Activated B cell treated with CpG ODN at 0.5 μM for 24 hours (primary cell): ENCODE measurements at regions of chr6 and their contacts with region 1.

Region 1: GRCh38 chr6:139364302-139364981 is 10.0 kb downstream of the CITED2 start:
- DNase-seq: no peak
- ATAC-seq: peak; percentile 67
- H3K4me3 Mint-ChIP-seq: peak overlapping the region; percentile 9
- H3K27ac Mint-ChIP-seq: no peak overlapping the region
- H3K4me1 Mint-ChIP-seq: peaks cover 20% of the 10 kb centered on the region
- H3K27me3 Mint-ChIP-seq: no peaks in the 10 kb centered on the region
- CTCF ChIP-seq: peak; percentile 67

Region 2: DNA sequence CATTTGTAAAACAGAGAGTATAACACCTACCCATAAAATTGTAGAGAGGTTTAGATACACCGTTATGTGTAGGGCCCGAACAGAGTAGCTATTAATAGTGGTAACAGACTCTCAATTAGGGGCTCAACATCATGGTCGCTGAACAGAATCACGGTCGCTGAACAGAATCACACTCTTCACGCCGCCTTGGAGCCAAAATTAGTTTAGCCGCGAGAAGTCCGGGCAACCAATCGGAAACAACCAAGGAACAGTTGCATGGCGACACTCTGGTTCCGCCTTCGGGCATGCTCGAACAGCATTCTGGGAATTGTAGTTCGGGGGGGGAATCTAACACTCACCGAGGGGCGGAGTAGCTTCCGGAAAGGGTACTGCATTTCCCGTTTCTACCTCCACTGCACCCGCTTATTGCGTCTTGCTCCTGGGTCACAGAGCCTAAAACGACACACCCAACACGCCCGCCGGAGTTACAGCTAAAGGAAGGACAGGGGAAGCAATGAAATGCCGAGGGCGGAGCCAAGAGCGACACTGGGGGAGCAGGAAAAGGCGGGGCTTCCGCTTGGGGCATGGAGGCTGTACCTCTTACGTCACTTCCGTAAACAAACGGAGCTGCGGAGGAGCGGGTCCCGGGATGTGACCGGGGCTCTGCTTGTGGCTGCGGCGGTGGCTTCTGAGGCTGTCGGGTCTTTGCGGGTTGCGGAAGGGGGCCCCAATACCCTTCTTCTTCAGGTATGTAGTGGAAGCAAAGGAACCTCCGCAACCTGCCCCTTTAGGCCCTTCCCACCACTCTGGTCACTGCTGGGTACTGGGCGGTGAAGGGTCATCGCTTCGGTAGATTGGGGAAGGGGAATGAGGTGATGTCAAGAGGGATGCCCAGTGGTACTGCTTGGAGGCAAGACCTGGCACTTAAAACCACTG is 591.0 kb before region 1 on chr6 and contains the start of gene CCDC28A:
- CTCF ChIA-PET with region 1: interaction called, 3 read pairs
- POLR2A ChIA-PET with region 1: no interaction called
- intact Hi-C with region 1: loop called (anchors 2 kb)
- DNase-seq: peak; percentile 90
- ATAC-seq: peak; percentile 85
- H3K4me3 Mint-ChIP-seq: peak within 1 kb of the TSS; percentile 100
- H3K27ac Mint-ChIP-seq: peak within 1 kb of the TSS; percentile 100
- H3K4me1 Mint-ChIP-seq: peaks cover 28% of the 10 kb centered on the region
- H3K27me3 Mint-ChIP-seq: no peaks in the 10 kb centered on the region
- CTCF ChIP-seq: no peak
- total RNA-seq, gene CCDC28A: 14.0 and 14.6 TPM in 2 replicates

Region 3: DNA sequence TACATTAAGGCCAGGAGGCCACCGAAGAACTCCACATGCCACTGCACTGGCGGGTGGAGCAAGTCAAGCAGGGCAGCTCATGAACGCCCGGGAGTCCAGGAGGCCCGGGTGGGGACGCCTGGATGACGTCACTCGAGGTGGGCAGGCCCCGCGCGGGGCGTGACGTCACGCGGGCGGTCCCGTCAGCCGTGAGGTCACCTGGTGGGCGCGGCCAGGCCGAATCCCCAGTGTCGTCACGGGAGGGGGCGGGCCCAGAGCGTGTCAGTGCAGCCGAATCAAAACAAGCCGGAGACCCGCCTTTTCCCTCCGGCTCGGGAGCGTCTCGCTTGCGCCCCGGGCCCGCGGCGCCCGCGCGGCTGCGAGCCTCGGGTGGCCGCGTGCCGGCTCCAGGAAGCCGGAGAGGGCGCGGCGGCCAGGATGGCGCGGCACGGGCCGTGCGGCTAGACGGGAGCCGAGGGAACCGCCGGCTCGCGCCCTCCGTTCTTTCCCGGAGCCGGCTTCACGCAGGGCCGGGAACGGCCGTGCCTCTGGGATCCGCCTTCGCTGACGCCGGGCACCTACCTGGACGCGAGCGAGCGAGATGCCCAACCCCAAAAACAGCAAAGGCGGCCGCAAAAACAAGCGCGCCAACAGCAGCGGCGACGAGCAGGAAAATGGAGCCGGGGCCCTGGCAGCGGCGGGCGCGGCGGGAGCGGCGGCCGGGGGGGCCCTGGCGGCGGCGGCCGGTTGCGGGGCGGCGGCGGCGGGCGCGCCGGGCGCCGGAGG is 229.4 kb before region 1 on chr6 and contains the start of gene HECA:
- CTCF ChIA-PET with region 1: interaction called, 10 read pairs
- POLR2A ChIA-PET with region 1: interaction called, 10 read pairs
- intact Hi-C with region 1: no loop called
- DNase-seq: peak; percentile 99
- ATAC-seq: peak; percentile 73
- H3K4me3 Mint-ChIP-seq: peak within 1 kb of the TSS; percentile 95
- H3K27ac Mint-ChIP-seq: peak within 1 kb of the TSS; percentile 98
- H3K4me1 Mint-ChIP-seq: peaks cover 79% of the 10 kb centered on the region
- H3K27me3 Mint-ChIP-seq: no peaks in the 10 kb centered on the region
- CTCF ChIP-seq: no peak
- total RNA-seq, gene HECA: 34.9 and 38.3 TPM in 2 replicates

Region 4: GRCh38 chr6:139250296-139251044 is 114.0 kb before region 1 on chr6:
- CTCF ChIA-PET with region 1: interaction called, 22 read pairs
- POLR2A ChIA-PET with region 1: interaction called, 4 read pairs
- intact Hi-C with region 1: loop called (anchors 1 kb)
- DNase-seq: peak; percentile 32
- ATAC-seq: peak; percentile 100
- H3K4me3 Mint-ChIP-seq: no peak overlapping the region
- H3K27ac Mint-ChIP-seq: no peak overlapping the region
- H3K4me1 Mint-ChIP-seq: peaks cover 12% of the 10 kb centered on the region
- H3K27me3 Mint-ChIP-seq: no peaks in the 10 kb centered on the region
- CTCF ChIP-seq: no peak

Region 5: GRCh38 chr6:139323511-139324300 is 40.7 kb before region 1 on chr6:
- CTCF ChIA-PET with region 1: interaction called, 15 read pairs
- POLR2A ChIA-PET with region 1: interaction called, 11 read pairs
- intact Hi-C with region 1: loop called (anchors 2 kb)
- DNase-seq: peak; percentile 56
- ATAC-seq: peak; percentile 62
- H3K4me3 Mint-ChIP-seq: peak overlapping the region; percentile 85
- H3K27ac Mint-ChIP-seq: peak overlapping the region; percentile 89
- H3K4me1 Mint-ChIP-seq: peaks cover 45% of the 10 kb centered on the region
- H3K27me3 Mint-ChIP-seq: no peaks in the 10 kb centered on the region
- CTCF ChIP-seq: no peak

Region 6: GRCh38 chr6:139392794-139393193 is 28.4 kb after region 1 on chr6:
- CTCF ChIA-PET with region 1: no interaction called
- POLR2A ChIA-PET with region 1: no interaction called
- intact Hi-C with region 1: no loop called
- DNase-seq: no peak
- ATAC-seq: peak; percentile 95
- H3K4me3 Mint-ChIP-seq: peak overlapping the region; percentile 35
- H3K27ac Mint-ChIP-seq: no peak overlapping the region
- H3K4me1 Mint-ChIP-seq: peaks cover 10% of the 10 kb centered on the region
- H3K27me3 Mint-ChIP-seq: no peaks in the 10 kb centered on the region
- CTCF ChIP-seq: no peak

Region 7: GRCh38 chr6:140183881-140184280 is 819.4 kb after region 1 on chr6:
- CTCF ChIA-PET with region 1: no interaction called
- POLR2A ChIA-PET with region 1: no interaction called
- intact Hi-C with region 1: no loop called
- DNase-seq: no peak
- ATAC-seq: no peak
- H3K4me3 Mint-ChIP-seq: no peak overlapping the region
- H3K27ac Mint-ChIP-seq: no peak overlapping the region
- H3K4me1 Mint-ChIP-seq: no peaks in the 10 kb centered on the region
- H3K27me3 Mint-ChIP-seq: no peaks in the 10 kb centered on the region
- CTCF ChIP-seq: no peak